ENCODE measurements at regions of chr5 and their contacts with region 1.

Region 1: DNA sequence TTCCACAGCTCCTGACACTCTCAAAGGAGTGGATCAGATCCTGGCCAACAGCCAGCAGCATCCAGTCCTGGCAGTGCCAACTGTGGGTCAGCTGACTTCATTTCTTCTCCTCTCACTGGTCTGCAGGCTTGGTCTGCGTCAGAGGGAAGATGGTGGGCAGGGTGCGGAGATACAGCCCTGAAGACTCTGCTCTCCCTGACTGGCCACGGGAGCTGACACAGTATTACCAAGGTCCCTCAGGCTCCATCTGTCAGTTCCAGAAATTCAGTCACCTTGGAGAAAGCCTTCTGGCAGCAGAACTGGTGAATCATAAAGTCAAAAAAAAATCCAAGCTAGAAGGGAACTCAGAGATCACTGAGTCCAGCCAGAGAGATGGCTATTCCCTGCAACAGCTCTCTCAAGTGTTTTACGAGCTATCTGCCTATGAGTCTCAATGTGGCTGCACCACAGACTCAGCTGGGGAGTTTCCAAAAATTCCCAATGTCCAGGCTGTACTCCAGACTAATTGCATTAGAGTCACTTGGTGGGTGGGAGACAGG is 28.0 kb downstream of the C1QTNF2 start:
- DNase-seq: no peak
- H3K4me3 ChIP-seq: no peak overlapping the region
- H3K27ac ChIP-seq: no peak overlapping the region
- H3K4me1 ChIP-seq: no peaks in the 10 kb centered on the region
- H3K27me3 ChIP-seq: no peaks in the 10 kb centered on the region
- CTCF ChIP-seq: no peak
- POLR2A ChIP-seq: no peak

Region 2: GRCh38 chr5:159965031-159965837 is 377.2 kb before region 1 on chr5:
- CTCF ChIA-PET with region 1: no interaction called
- POLR2A ChIA-PET with region 1: no interaction called
- dilution Hi-C with region 1: no loop called
- intact Hi-C with region 1: no loop called
- DNase-seq: peak; percentile 37
- H3K4me3 ChIP-seq: no peak overlapping the region
- H3K27ac ChIP-seq: no peak overlapping the region
- H3K4me1 ChIP-seq: no peaks in the 10 kb centered on the region
- H3K27me3 ChIP-seq: peaks cover 5 to 10% of the 10 kb centered on the region in 2 experiments
- CTCF ChIP-seq: peak; percentile 50 to 57
- POLR2A ChIP-seq: no peak

Region 3: GRCh38 chr5:160082614-160083500 is 259.6 kb before region 1 on chr5:
- CTCF ChIA-PET with region 1: interaction called, 34 read pairs
- POLR2A ChIA-PET with region 1: interaction called, 3 read pairs
- dilution Hi-C with region 1: no loop called
- intact Hi-C with region 1: loop called (anchors 1 kb)
- DNase-seq: peak; percentile 79
- H3K4me3 ChIP-seq: peak overlapping the region in 1 of 3 experiments; percentile 41
- H3K27ac ChIP-seq: peak overlapping the region; percentile 63
- H3K4me1 ChIP-seq: peaks cover 23% of the 10 kb centered on the region
- H3K27me3 ChIP-seq: no peaks in the 10 kb centered on the region
- CTCF ChIP-seq: no peak
- POLR2A ChIP-seq: no peak

Region 4: GRCh38 chr5:160199410-160199911 is 143.0 kb before region 1 on chr5:
- CTCF ChIA-PET with region 1: interaction called, 73 read pairs
- POLR2A ChIA-PET with region 1: interaction called, 3 read pairs
- dilution Hi-C with region 1: no loop called
- intact Hi-C with region 1: loop called (anchors 1 kb)
- DNase-seq: peak; percentile 42
- H3K4me3 ChIP-seq: peak overlapping the region in 1 of 3 experiments; percentile 35
- H3K27ac ChIP-seq: no peak overlapping the region
- H3K4me1 ChIP-seq: peaks cover 12% of the 10 kb centered on the region
- H3K27me3 ChIP-seq: no peaks in the 10 kb centered on the region
- CTCF ChIP-seq: peak; percentile 85 to 93
- POLR2A ChIP-seq: no peak

Region 5: DNA sequence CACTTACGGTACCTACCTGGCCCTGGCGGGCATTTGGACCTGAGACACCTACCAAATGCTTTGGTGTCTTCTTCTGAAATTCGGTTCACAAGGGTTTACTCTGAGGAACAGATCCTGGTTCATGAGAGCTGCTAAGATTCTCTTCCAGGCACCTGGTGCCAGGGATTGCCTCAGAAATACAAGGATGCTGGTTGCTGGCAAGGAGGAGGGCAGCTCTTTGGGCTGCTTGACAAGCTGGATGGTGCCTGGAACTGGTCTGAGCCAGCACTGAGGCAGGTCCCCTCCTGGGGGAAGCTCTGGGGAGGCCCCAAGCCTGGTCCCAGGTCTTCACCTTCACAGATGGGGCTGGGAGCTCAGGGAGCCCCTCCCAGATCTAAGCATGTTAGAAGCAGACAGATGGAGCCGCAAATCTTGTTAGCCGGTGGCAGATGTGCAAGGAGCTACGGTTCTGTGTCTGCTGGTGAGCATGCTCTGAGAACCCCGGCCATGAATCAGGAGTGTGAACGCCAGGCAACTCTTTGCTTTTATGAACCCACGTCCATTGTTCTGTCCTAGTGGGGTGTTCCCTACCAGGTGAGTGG is 96.9 kb before region 1 on chr5:
- CTCF ChIA-PET with region 1: interaction called, 87 read pairs
- POLR2A ChIA-PET with region 1: no interaction called
- dilution Hi-C with region 1: no loop called
- intact Hi-C with region 1: loop called (anchors 1 kb)
- DNase-seq: no peak
- H3K4me3 ChIP-seq: no peak overlapping the region
- H3K27ac ChIP-seq: no peak overlapping the region
- H3K4me1 ChIP-seq: no peaks in the 10 kb centered on the region
- H3K27me3 ChIP-seq: no peaks in the 10 kb centered on the region
- CTCF ChIP-seq: no peak
- POLR2A ChIP-seq: no peak

Region 6: GRCh38 chr5:160260881-160261815 is 81.3 kb before region 1 on chr5:
- CTCF ChIA-PET with region 1: interaction called, 4 read pairs
- POLR2A ChIA-PET with region 1: no interaction called
- dilution Hi-C with region 1: no loop called
- intact Hi-C with region 1: loop called (anchors 2 kb)
- DNase-seq: peak; percentile 86
- H3K4me3 ChIP-seq: no peak overlapping the region
- H3K27ac ChIP-seq: peak overlapping the region; percentile 4
- H3K4me1 ChIP-seq: peaks cover 30% of the 10 kb centered on the region
- H3K27me3 ChIP-seq: no peaks in the 10 kb centered on the region
- CTCF ChIP-seq: no peak
- POLR2A ChIP-seq: no peak

Region 7: DNA sequence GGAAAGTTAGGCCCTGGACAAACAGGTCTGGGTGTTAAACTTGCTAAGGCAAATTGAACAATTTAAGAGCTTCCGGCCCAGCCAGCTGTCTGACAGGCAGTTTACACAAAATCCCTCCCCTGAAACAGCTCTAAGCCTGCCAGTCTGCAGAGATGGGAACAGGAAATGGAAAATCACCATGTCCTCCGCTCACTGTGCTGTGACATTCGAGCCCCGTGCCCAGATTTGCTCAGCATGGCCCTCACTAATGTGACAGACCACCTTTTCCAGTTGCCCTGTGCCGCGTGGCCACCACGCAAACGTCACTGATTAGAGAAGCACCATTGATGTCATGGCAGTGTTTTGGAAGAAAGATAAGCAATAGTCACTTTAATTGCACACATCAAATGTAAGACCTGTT is 71.1 kb before region 1 on chr5:
- CTCF ChIA-PET with region 1: interaction called, 7 read pairs
- POLR2A ChIA-PET with region 1: no interaction called
- dilution Hi-C with region 1: no loop called
- intact Hi-C with region 1: loop called (anchors 1 kb)
- DNase-seq: peak; percentile 51
- H3K4me3 ChIP-seq: peak overlapping the region in 1 of 3 experiments; percentile 1
- H3K27ac ChIP-seq: peak overlapping the region; percentile 19
- H3K4me1 ChIP-seq: peaks cover 49% of the 10 kb centered on the region
- H3K27me3 ChIP-seq: no peaks in the 10 kb centered on the region
- CTCF ChIP-seq: no peak
- POLR2A ChIP-seq: no peak

Region 8: GRCh38 chr5:160312134-160312959 is 30.1 kb before region 1 on chr5 and contains the start of gene CCNJL:
- CTCF ChIA-PET with region 1: interaction called, 7 read pairs
- POLR2A ChIA-PET with region 1: no interaction called
- dilution Hi-C with region 1: no loop called
- intact Hi-C with region 1: loop called (anchors 1 kb)
- DNase-seq: peak; percentile 78
- H3K4me3 ChIP-seq: peak within 1 kb of the TSS; percentile 23 to 80 (median 76)
- H3K27ac ChIP-seq: peak within 1 kb of the TSS; percentile 29
- H3K4me1 ChIP-seq: peaks cover 28% of the 10 kb centered on the region
- H3K27me3 ChIP-seq: no peaks in the 10 kb centered on the region
- CTCF ChIP-seq: no peak
- POLR2A ChIP-seq: peak; percentile 85
- total RNA-seq, gene CCNJL: 17.4 and 20.0 TPM in 2 replicates

Region 9: GRCh38 chr5:160379511-160379910 is 37.0 kb after region 1 on chr5:
- CTCF ChIA-PET with region 1: no interaction called
- POLR2A ChIA-PET with region 1: no interaction called
- dilution Hi-C with region 1: no loop called
- intact Hi-C with region 1: no loop called
- DNase-seq: no peak
- H3K4me3 ChIP-seq: no peak overlapping the region
- H3K27ac ChIP-seq: no peak overlapping the region
- H3K4me1 ChIP-seq: no peaks in the 10 kb centered on the region
- H3K27me3 ChIP-seq: peaks cover 33 to 36% of the 10 kb centered on the region in 2 experiments
- CTCF ChIP-seq: no peak
- POLR2A ChIP-seq: no peak